ENCODE measurements at regions of chr3 and their contacts with region 1.

Region 1: GRCh38 chr3:88113311-88114162 is 36.2 kb upstream of the C3orf38 start:
- DNase-seq: peak; percentile 88
- H3K4me3 ChIP-seq: no peak overlapping the region
- H3K27ac ChIP-seq: peak overlapping the region; percentile 41
- H3K4me1 ChIP-seq: peaks cover 18% of the 10 kb centered on the region
- H3K27me3 ChIP-seq: no peaks in the 10 kb centered on the region
- CTCF ChIP-seq: peak; percentile 85

Region 2: DNA sequence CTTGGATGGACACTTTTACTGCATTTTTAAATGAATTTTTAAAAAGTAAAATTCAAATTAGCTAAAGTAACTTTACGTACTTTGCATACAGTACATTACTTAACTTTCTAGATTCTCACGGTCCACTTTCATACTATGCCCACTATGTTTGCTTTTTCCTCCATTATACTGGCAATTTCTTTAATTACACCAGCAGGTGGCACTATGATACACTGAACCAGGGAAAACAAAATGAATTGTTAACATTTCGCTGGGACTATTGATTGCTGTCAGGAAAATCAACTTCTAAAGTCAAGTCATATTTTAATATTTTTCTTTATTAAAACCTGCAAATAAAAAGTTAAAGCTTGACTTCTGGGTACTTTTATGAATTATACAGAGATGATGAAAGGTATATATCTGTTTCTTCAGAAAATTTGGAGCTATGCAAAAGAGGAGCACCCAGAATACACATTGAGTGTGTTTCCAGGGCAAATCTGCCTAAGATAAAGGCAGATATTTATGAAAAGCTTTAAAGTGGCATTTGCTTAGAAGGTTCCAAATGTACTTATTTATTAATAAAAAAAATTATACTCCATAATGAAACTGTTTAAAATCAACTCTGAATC is 815.3 kb before region 1 on chr3:
- CTCF ChIA-PET with region 1: no interaction called
- POLR2A ChIA-PET with region 1: no interaction called
- intact Hi-C with region 1: loop called (anchors 2 kb)
- DNase-seq: peak; percentile 84
- H3K4me3 ChIP-seq: no peak overlapping the region
- H3K27ac ChIP-seq: peak overlapping the region; percentile 17
- H3K4me1 ChIP-seq: peaks cover 43% of the 10 kb centered on the region
- H3K27me3 ChIP-seq: no peaks in the 10 kb centered on the region
- CTCF ChIP-seq: peak; percentile 85

Measured in A673 (cell line).